Tibial artery (tissue), 4 donors: ENCODE measurements at regions of chr21 and their contacts with region 1.

Region 1: DNA sequence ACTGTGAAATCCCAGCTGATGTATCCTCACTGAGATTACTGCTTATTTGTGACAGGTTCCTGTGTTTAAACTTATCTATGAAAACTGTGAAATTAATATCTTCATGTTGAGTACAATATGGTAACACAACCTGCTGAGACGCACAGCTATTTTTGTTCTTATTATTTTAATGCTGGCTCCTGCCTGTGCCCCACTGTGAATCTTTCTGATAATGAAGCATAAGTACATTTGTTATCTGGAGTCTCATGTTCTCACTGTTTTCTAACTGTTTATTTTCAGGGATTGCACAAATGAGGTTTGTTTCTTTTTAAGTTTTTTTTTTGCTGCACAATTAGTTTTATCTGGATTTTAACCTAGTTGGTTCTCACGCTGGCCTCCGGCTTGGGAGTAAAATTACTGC is 39.9 kb upstream of the IFNAR2 start:
- DNase-seq: no peak
- H3K4me3 ChIP-seq: no peak overlapping the region
- H3K27ac ChIP-seq: no peak overlapping the region
- H3K4me1 ChIP-seq: no peaks in the 10 kb centered on the region
- H3K27me3 ChIP-seq: peaks cover 0 to 15% of the 10 kb centered on the region in 2 donors
- CTCF ChIP-seq: no peak

Region 2: GRCh38 chr21:32834916-32835235 is 354.9 kb before region 1 on chr21:
- intact Hi-C with region 1: loop called (anchors 5 kb)
- DNase-seq: no peak
- H3K4me3 ChIP-seq: no peak overlapping the region
- H3K27ac ChIP-seq: no peak overlapping the region
- H3K4me1 ChIP-seq: no peaks in the 10 kb centered on the region
- H3K27me3 ChIP-seq: peaks cover 0 to 6% of the 10 kb centered on the region in 2 donors
- CTCF ChIP-seq: no peak

Region 3: DNA sequence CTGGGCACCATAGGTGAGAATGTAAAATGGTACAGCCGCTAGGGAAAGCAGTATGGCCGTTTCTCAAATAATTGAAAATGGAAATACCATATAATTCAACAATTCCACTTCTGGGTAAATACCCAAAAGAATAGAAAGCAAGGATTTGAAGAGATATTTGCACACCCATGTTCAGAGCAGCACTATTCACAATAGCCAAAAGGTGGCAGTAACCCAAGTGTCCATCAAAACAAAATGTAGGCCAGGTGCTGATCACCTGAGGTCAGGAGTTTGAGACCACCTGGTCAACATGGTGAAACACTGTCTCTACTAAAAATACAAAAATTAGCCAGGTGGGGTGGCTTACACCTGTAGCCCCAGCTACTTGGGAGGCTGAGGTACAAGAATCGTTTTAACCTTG is 57.8 kb before region 1 on chr21:
- intact Hi-C with region 1: no loop called
- DNase-seq: no peak
- H3K4me3 ChIP-seq: no peak overlapping the region
- H3K27ac ChIP-seq: no peak overlapping the region
- H3K4me1 ChIP-seq: peaks cover 0 to 7% (median 2%) of the 10 kb centered on the region in 4 donors
- H3K27me3 ChIP-seq: peaks cover 0 to 52% of the 10 kb centered on the region in 2 donors
- CTCF ChIP-seq: no peak